GM12878 (cell line): ENCODE measurements at regions of chr4 and their contacts with region 1.

Region 1: DNA sequence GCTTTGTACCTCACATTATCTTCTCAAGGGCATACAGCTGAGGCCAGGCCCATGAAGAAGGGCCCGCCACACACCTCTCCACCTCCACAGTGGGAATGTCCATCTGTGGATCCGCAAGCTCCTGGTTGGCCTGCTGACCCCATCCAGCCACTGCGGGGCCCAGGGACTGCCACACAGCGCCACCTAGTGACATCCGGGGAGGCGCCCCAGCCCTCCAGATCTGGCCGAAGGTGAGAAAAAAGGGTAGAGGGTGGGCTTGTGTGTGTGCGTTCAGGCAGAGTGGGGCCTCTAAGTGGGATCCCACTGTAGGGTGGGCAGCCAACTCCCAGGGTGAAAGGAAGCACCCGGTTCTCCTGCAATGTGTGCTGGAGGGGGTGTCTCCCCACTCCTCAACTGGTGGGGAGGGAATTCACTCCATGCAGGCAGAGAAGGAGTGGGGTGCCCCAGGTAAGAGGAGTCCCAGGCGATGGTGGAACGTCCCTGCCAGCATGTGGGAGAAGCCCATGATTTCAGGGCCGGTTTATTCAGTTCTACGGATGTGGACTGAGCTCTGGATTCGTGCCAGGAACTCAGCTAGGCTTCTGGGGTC is 117.3 kb downstream of the ENPP6 start:
- DNase-seq: no peak
- ATAC-seq: peak; percentile 94
- H3K4me3 ChIP-seq: no peak overlapping the region
- H3K27ac ChIP-seq: no peak overlapping the region
- H3K4me1 ChIP-seq: no peaks in the 10 kb centered on the region; the same call in none of the 2 replicates
- H3K27me3 ChIP-seq: peaks cover 0 to 1% of the 10 kb centered on the region in 2 experiments; a peak in 1 of 4 replicates
- CTCF ChIP-seq: peak; percentile 79 to 91 (median 85)
- EP300 ChIP-seq: no peak
- POLR2A ChIP-seq: no peak
- RAD21 ChIP-seq: peak; percentile 81

Region 2: DNA sequence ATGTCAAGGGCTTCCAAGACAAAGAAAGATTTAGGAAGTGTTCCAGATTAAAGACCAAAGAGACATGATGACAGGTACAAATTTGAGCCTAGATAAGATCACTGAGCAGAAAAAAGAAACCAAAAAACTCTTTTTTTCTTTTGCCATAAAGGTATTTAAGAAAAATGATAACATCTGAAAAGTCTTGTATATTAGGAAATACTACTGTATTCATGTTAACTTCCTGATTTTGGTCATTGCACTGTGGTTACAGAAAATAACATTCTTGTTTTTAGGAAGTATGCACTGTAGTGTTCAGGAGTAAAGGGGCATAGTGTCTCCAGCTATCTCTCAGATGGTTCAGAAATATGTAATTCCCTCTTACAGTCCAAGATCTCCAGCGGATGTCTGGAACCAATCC is 478.5 kb before region 1 on chr4:
- CTCF ChIA-PET with region 1: no interaction called
- POLR2A ChIA-PET with region 1: no interaction called
- RAD21 ChIA-PET with region 1: interaction called, 3 read pairs
- SMC1A ChIA-PET with region 1: no interaction called
- in situ Hi-C with region 1: no loop called
- intact Hi-C with region 1: loop called (anchors 10 kb)
- DNase-seq: no peak
- ATAC-seq: no peak
- H3K4me3 ChIP-seq: no peak overlapping the region
- H3K27ac ChIP-seq: no peak overlapping the region
- H3K4me1 ChIP-seq: no peaks in the 10 kb centered on the region
- H3K27me3 ChIP-seq: peaks cover 0 to 2% of the 10 kb centered on the region in 2 experiments; a peak in 1 of 4 replicates
- CTCF ChIP-seq: no peak
- EP300 ChIP-seq: no peak
- POLR2A ChIP-seq: no peak
- RAD21 ChIP-seq: no peak

Region 3: DNA sequence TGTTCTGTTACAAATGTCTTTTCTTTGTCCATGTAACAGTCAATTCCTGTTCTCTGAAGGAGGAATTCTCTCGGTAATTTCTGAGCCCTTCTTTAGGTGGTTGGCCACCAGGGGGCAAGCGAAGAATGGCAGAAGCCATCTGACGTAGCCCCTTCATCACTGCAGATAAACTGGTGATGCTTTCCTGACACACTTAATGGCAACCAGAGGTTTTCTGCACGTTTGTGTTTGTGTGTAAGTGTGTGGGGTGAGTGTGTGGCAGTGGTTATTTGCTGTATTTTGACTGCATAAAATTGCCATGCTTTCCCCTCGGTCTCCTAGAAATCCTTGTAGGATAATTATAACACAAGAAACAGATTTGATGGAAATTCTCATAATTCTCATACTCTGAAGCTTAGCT is 260.1 kb before region 1 on chr4:
- CTCF ChIA-PET with region 1: interaction called, 18 read pairs
- POLR2A ChIA-PET with region 1: no interaction called
- RAD21 ChIA-PET with region 1: interaction called, 5 read pairs
- SMC1A ChIA-PET with region 1: interaction called, 7 read pairs
- in situ Hi-C with region 1: no loop called
- intact Hi-C with region 1: loop called (anchors 1 kb)
- DNase-seq: peak; percentile 5
- ATAC-seq: peak; percentile 92
- H3K4me3 ChIP-seq: no peak overlapping the region
- H3K27ac ChIP-seq: no peak overlapping the region
- H3K4me1 ChIP-seq: no peaks in the 10 kb centered on the region
- H3K27me3 ChIP-seq: no peaks in the 10 kb centered on the region
- CTCF ChIP-seq: peak; percentile 81 to 89 (median 88)
- EP300 ChIP-seq: no peak
- POLR2A ChIP-seq: no peak
- RAD21 ChIP-seq: peak; percentile 93

Region 4: DNA sequence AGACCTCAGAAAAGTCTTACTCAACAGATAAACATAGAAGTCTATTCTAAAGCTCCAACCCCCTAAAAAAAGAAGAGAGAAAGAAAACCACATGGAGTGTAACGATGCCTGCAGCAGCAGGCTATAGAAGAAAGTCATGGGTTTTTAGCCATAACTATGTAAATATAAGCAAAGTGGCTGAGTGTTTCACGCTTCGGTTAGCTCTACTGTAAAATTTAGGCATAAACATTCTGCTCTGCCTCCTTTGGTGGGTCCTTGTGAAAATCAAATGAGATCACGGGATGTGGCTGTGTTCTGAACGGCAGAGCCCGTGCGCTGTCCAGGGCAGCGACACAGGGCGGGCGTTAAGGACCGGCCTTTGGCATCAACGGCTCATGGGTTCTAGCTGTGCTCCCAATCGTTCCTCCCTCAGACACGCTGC is 295.6 kb after region 1 on chr4:
- CTCF ChIA-PET with region 1: no interaction called
- POLR2A ChIA-PET with region 1: no interaction called
- RAD21 ChIA-PET with region 1: no interaction called
- SMC1A ChIA-PET with region 1: no interaction called
- in situ Hi-C with region 1: no loop called
- intact Hi-C with region 1: no loop called
- DNase-seq: peak; percentile 81
- ATAC-seq: peak; percentile 89
- H3K4me3 ChIP-seq: peak overlapping the region; percentile 29
- H3K27ac ChIP-seq: peak overlapping the region; percentile 76
- H3K4me1 ChIP-seq: peaks cover 29% of the 10 kb centered on the region
- H3K27me3 ChIP-seq: no peaks in the 10 kb centered on the region
- CTCF ChIP-seq: no peak
- EP300 ChIP-seq: no peak
- POLR2A ChIP-seq: peak; percentile 63; the same call in 1 of the 2 replicates
- RAD21 ChIP-seq: no peak